Activated CD4-positive, alpha-beta T cell treated with anti-CD3 and anti-CD28 coated beads for 36 hours (primary cell): ENCODE measurements at regions of chr7 and their contacts with region 1.

Region 1: GRCh38 chr7:99408379-99409191 is at the starts of genes BUD31 and PDAP1:
- DNase-seq: peak; percentile 94
- ATAC-seq: peak; percentile 89
- H3K4me3 Mint-ChIP-seq: peak within 1 kb of the TSS; percentile 90
- H3K27ac Mint-ChIP-seq: peak within 1 kb of the TSS; percentile 96
- H3K4me1 Mint-ChIP-seq: peaks cover 40% of the 10 kb centered on the region
- H3K27me3 Mint-ChIP-seq: no peaks in the 10 kb centered on the region
- total RNA-seq, gene BUD31: 140 to 190 TPM
- total RNA-seq, gene PDAP1: 171 TPM

Region 2: DNA sequence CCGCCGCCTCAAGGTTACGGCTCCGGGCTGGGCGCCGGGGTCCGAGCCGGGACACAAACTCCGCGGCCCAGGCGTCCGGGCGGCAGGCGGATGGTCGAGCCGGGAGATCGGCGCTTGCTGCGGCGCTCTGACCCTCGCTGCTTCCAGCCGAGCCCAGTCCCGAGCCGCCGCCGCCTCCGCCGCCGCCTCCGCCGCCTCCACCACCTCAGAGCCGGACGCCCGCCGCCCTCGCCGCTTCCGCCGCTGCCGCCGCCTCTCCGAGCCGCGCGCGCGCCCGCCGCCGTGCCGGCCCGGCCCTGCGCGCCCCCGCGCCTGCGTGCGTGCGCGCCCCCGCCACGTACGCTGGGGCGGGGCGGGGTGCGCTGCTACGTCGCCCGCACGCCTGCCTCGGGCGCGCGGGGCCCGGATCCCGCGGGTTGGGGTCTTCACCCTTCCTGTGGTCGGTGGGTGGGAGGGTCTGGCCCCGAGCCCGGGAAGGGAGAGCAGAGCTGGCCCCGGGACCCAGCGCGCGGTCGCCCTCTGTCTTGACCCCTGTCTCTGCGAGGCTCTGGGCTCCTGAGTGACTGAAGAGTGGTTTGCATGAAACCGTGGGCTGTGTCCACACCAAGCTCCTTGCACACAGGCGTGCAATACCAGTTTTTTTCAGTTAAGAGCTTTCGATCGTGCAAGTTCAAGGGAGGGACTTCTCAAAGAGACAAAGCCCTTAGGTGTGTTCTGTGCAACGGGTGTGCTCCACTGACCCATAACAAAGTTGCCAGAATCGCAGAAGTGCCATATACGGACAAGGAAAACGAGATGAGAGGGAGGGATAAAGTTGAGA is 264.5 kb before region 1 on chr7 and contains the start of gene SMURF1:
- CTCF ChIA-PET with region 1: no interaction called
- POLR2A ChIA-PET with region 1: no interaction called
- intact Hi-C with region 1: loop called in 1 of 2 experiments (anchors 1 kb)
- DNase-seq: peak; percentile 83
- ATAC-seq: peak; percentile 37
- H3K4me3 Mint-ChIP-seq: peak within 1 kb of the TSS; percentile 91
- H3K27ac Mint-ChIP-seq: peak within 1 kb of the TSS; percentile 93
- H3K4me1 Mint-ChIP-seq: peaks cover 35% of the 10 kb centered on the region
- H3K27me3 Mint-ChIP-seq: peaks cover 5% of the 10 kb centered on the region
- total RNA-seq, gene SMURF1: 12.4 to 13.4 TPM

Region 3: DNA sequence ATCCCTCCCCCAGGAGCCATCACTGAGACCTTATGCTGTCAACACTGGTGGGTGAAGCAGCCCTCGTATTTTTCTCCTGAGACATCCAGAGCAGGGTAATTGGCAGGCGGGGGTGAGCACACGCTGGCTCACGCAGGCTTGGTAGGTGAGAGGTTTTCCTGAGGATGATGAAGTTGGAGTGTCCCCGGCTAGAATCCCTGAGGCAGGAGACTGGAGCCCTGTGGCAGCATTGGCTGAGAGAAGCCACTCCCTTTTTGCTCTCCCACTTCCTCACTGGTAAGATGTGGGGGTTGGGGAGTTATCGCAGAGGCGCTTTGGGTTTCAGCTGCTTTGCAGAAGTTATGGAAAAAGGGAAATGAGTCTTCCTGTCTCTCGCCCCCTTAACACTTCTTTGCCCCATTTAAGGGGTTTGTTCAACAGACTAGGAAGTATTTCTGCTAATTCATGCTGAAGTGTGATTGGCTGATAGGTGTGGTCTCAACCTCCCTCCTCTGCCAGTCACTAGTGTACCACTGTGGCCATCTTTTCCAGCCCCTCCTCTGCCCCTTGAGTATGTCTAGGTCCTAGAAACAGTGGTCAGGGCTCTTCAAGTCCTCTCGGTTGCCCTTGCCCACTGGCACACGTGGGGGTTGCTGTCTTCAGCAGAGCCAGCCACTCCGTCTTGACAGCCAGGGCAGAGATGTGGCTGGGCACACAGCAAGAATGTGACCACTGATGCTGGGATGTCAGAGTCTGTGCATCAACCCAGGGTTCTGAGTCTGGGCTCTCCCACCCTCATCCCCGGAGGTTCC is 28.4 kb before region 1 on chr7:
- CTCF ChIA-PET with region 1: interaction called, 3 read pairs
- POLR2A ChIA-PET with region 1: interaction called, 11 read pairs
- intact Hi-C with region 1: loop called (anchors 1 kb)
- DNase-seq: peak; percentile 69
- ATAC-seq: peak; percentile 22
- H3K4me3 Mint-ChIP-seq: peak overlapping the region; percentile 78
- H3K27ac Mint-ChIP-seq: peak overlapping the region; percentile 96
- H3K4me1 Mint-ChIP-seq: peaks cover 62% of the 10 kb centered on the region
- H3K27me3 Mint-ChIP-seq: no peaks in the 10 kb centered on the region

Region 4: GRCh38 chr7:99438573-99439480 is 30.2 kb after region 1 on chr7 and contains the starts of genes CPSF4 and PTCD1:
- CTCF ChIA-PET with region 1: interaction called, 4 read pairs
- POLR2A ChIA-PET with region 1: no interaction called
- intact Hi-C with region 1: loop called (anchors 1 to 2 kb)
- DNase-seq: peak; percentile 96
- ATAC-seq: peak; percentile 93
- H3K4me3 Mint-ChIP-seq: peak within 1 kb of the TSS; percentile 91
- H3K27ac Mint-ChIP-seq: peak within 1 kb of the TSS; percentile 98
- H3K4me1 Mint-ChIP-seq: peaks cover 36% of the 10 kb centered on the region
- H3K27me3 Mint-ChIP-seq: no peaks in the 10 kb centered on the region
- total RNA-seq, gene CPSF4: 56.1 to 57.9 TPM
- total RNA-seq, gene PTCD1: 4.7 to 7.7 TPM

Region 5: DNA sequence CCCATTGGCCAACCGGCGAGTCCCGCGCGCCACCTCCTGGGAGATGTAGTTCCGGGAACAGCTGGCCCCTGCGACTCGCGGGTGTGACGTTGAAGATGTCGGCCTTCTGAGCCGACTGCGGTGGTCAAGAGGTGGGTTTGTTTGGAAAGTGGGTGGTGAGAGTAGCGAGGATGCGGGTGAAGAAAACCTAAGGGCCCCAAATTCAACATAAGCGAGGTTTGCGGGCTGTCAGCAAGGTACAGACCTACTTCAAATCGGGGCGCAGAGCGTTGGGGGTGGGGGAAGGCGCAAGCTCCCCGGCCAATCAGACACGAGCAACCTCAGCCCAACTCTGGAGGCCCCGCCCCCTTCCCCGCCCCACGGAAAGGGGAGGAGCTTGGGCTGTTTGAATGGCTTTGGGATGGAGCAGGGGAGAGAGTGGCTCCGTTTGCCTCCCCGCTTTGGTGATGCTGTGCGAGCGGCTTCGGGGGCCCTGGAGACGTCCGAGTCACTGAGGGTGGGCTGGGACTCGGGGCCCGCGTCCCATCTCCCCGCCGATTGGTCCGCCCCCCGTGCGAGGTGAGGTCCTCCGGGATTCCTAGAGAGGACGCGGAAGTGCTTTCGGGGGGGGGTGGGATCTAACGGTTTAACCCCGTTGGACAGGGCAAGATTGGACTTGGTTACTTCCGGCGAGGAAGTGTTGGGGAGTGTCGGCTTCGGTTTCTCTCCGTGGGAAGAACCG is 96.2 kb after region 1 on chr7 and contains the start of gene ZKSCAN5:
- CTCF ChIA-PET with region 1: interaction called, 3 read pairs
- POLR2A ChIA-PET with region 1: interaction called, 4 read pairs
- intact Hi-C with region 1: loop called (anchors 1 to 5 kb)
- DNase-seq: peak; percentile 99
- ATAC-seq: peak; percentile 87
- H3K4me3 Mint-ChIP-seq: peak within 1 kb of the TSS; percentile 87
- H3K27ac Mint-ChIP-seq: peak within 1 kb of the TSS; percentile 97
- H3K4me1 Mint-ChIP-seq: peaks cover 25% of the 10 kb centered on the region
- H3K27me3 Mint-ChIP-seq: no peaks in the 10 kb centered on the region
- total RNA-seq, gene ZKSCAN5: 10.1 to 12.1 TPM

Region 6: GRCh38 chr7:99616359-99617191 is 208.0 kb after region 1 on chr7 and contains the start of gene ZSCAN25:
- CTCF ChIA-PET with region 1: no interaction called
- POLR2A ChIA-PET with region 1: no interaction called
- intact Hi-C with region 1: no loop called
- DNase-seq: peak; percentile 92
- ATAC-seq: peak; percentile 93
- H3K4me3 Mint-ChIP-seq: peak within 1 kb of the TSS; percentile 92
- H3K27ac Mint-ChIP-seq: peak within 1 kb of the TSS; percentile 96
- H3K4me1 Mint-ChIP-seq: peaks cover 44% of the 10 kb centered on the region
- H3K27me3 Mint-ChIP-seq: no peaks in the 10 kb centered on the region
- total RNA-seq, gene ZSCAN25: 20.5 to 25.2 TPM

Region 7: GRCh38 chr7:100015232-100016209 is 606.9 kb after region 1 on chr7 and contains the start of gene ZKSCAN1:
- CTCF ChIA-PET with region 1: no interaction called
- POLR2A ChIA-PET with region 1: no interaction called
- intact Hi-C with region 1: loop called in 1 of 2 experiments (anchors 2 kb)
- DNase-seq: peak; percentile 92
- ATAC-seq: peak; percentile 87
- H3K4me3 Mint-ChIP-seq: peak within 1 kb of the TSS; percentile 94
- H3K27ac Mint-ChIP-seq: peak within 1 kb of the TSS; percentile 96
- H3K4me1 Mint-ChIP-seq: peaks cover 53% of the 10 kb centered on the region
- H3K27me3 Mint-ChIP-seq: no peaks in the 10 kb centered on the region
- total RNA-seq, gene ZKSCAN1: 45.2 to 62.9 TPM